Thyroid gland (tissue), 4 donors: ENCODE measurements at regions of chr5 and their contacts with region 1.

Region 1: GRCh38 chr5:61658592-61659008 is 326.5 kb downstream of the ZSWIM6 start:
- DNase-seq: peak; percentile 85 to 93
- H3K4me3 ChIP-seq: no peak overlapping the region
- H3K27ac ChIP-seq: no peak overlapping the region
- H3K4me1 ChIP-seq: no peaks in the 10 kb centered on the region
- H3K27me3 ChIP-seq: no peaks in the 10 kb centered on the region
- CTCF ChIP-seq: peak; percentile 85 to 92 (median 89)
- POLR2A ChIP-seq: no peak

Region 2: DNA sequence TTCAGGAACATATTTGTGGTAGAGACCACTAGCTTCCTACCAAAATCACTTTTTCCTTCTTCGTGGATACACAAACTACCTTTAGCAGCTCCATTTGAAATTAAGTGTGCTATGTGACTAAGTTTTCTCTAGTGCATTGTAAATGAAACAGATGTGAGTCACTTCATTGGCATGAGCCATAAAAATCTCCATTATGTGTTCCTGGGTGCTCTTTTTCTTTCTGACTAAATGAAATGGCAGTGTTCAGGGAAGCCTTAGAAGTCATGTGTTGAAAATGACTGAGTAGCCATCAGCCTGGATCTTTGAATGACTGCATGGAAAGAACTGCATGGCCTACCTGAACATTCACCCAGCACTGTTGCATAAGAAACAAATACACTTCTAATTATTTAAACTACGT is 605.7 kb before region 1 on chr5:
- intact Hi-C with region 1: loop called (anchors 5 kb)
- DNase-seq: no peak
- H3K4me3 ChIP-seq: no peak overlapping the region
- H3K27ac ChIP-seq: no peak overlapping the region
- H3K4me1 ChIP-seq: no peaks in the 10 kb centered on the region
- H3K27me3 ChIP-seq: no peaks in the 10 kb centered on the region
- CTCF ChIP-seq: no peak
- POLR2A ChIP-seq: no peak

Region 3: DNA sequence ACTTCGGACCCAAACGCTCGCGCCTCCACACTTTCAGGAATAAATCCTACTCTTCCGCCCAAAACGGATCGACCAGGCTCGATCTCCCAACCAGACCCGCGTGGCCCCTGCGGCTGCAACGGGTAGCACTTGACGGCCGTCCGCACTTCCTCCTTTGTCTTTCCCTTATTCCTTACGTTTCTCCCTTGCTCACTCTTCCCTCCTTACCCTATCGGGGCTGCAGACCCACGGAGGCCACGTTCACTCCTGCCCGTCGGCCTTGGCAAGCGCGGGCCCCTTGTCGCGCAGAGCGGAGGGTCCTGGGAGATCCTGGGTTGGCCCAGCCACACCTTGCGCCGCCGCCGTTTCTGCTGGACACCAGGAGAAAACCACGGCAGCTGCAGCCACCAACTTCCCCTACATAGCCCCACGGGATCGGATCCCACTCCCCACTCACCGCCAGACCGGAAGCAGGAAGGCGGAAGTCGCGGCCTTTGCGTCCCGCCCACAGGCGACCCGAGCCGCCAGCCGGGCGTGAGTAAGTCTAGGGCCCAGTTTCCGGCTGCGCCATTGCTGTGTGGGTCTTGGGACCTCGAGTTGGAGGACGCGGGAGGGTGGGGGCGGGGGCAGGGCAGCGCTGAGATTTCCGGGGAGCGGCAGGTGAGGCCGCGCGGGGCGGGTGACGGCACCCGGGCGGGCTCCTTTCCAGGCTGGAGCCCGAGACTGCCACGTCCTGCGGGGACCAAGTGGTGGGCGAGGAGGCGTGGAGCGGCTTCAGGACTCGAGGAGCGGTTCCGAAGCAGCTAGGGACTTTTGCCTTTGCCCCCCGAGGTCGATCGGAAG is 496.4 kb before region 1 on chr5 and contains the start of gene SMIM15:
- intact Hi-C with region 1: loop called (anchors 10 kb)
- DNase-seq: peak; percentile 93
- H3K4me3 ChIP-seq: peak within 1 kb of the TSS; percentile 42 to 87 (median 81)
- H3K27ac ChIP-seq: peak within 1 kb of the TSS; percentile 76 to 95 (median 94)
- H3K4me1 ChIP-seq: peaks cover 5 to 13% of the 10 kb centered on the region in 2 donors
- H3K27me3 ChIP-seq: no peaks in the 10 kb centered on the region
- CTCF ChIP-seq: no peak
- POLR2A ChIP-seq: peak in 1 of 2 donors; percentile 81
- total RNA-seq, gene SMIM15: 37.4 to 55.9 (median 41.2) TPM

Region 4: GRCh38 chr5:61467766-61468482 is 190.7 kb before region 1 on chr5:
- intact Hi-C with region 1: no loop called
- DNase-seq: no peak
- H3K4me3 ChIP-seq: no peak overlapping the region
- H3K27ac ChIP-seq: no peak overlapping the region
- H3K4me1 ChIP-seq: peaks cover 17 to 30% of the 10 kb centered on the region in 2 donors
- H3K27me3 ChIP-seq: no peaks in the 10 kb centered on the region
- CTCF ChIP-seq: no peak
- POLR2A ChIP-seq: no peak